Natural killer cell (primary cell): ENCODE measurements at regions of chr5 and their contacts with region 1.

Region 1: DNA sequence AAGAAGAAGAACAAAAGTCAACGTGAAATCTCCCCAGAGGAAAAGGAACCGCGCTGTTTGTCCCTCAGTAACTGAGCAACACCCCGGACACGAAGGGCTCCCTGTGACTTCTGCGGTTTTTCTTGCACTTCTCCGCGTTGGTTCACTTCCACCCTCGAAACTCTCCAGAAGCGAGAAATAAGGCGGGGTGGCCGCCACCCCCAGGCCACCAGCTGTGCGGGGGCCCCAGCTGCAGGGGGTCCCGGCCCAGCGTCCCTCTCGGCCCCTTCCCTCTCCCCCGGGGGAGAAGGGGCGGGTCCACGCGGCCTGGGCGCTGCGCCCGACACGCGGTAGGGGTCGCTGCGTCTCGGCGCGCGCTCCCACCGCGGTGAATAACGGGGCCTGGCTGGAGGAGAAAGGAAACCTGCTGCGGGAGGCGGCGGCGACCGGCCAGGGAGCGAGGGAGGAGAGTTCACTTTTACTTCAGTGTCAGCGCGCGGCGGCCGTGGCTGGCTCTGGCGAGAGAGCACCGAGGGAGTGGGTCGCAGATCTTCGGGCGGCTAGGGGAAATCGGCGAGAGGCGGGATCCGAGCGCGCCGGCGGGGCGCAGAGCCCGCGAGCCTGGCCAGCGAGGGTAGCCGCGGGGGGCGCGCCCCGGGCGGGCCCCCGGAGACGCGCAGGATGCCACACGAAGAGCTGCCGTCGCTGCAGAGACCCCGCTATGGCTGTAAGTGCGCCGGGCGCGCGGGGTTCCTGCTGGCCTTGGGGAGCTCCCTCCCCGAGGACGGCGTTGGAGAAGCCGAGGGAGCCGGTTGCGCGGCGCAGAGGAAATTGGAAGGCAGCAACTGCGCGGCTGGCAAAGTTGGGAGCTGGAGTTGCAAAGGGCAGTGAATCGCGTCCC is at the start of gene IQGAP2:
- DNase-seq: peak; percentile 89 to 94
- ATAC-seq: peak; percentile 58 to 81 (median 65)
- H3K4me3 ChIP-seq: peak within 1 kb of the TSS; percentile 94
- H3K4me3 Mint-ChIP-seq: peak within 1 kb of the TSS; percentile 99
- H3K27ac ChIP-seq: peak within 1 kb of the TSS; percentile 96
- H3K27ac Mint-ChIP-seq: peak within 1 kb of the TSS; percentile 98 to 99
- H3K4me1 ChIP-seq: peaks cover 46% of the 10 kb centered on the region
- H3K4me1 Mint-ChIP-seq: peaks cover 70 to 73% of the 10 kb centered on the region in 2 donors
- H3K27me3 ChIP-seq: no peaks in the 10 kb centered on the region
- H3K27me3 Mint-ChIP-seq: no peaks in the 10 kb centered on the region
- CTCF ChIP-seq: peak; percentile 67
- total RNA-seq, gene IQGAP2: 172 to 218 (median 207) TPM

Region 2: DNA sequence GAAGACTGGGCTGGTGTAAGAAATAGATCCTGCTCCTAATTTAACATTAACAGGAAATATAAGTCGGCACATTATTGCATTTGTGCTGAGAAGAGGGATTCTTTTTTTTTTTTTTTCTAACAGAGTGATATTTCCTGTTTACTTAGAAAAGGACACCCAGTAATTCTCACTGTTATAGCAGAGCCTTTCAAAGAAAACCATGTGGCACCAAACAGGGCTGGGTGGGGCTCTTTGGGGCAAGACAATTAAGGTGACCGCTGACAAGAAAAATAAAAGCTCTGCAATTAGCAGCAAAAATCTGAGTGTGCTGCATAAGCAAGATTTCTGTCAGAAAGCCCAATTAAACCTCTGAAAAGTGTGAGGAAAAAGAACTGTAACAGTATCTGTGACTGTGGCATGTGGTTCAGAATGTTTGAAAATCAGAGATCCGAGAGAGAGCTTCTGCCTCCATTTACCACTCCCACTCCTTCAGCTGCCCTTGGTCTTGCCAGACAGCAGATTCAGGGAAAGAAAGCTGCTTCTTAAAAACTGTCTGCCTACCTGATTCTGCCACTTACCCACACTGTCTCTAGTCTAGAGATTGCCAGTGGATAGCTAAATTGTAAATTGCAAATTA is 77.1 kb before region 1 on chr5:
- intact Hi-C with region 1: loop called (anchors 5 kb)
- DNase-seq: peak; percentile 47 to 66
- ATAC-seq: peak; percentile 93 to 94 (median 93)
- H3K4me3 ChIP-seq: no peak overlapping the region
- H3K4me3 Mint-ChIP-seq: peak overlapping the region; percentile 86
- H3K27ac ChIP-seq: peak overlapping the region; percentile 81
- H3K27ac Mint-ChIP-seq: peak overlapping the region; percentile 90 to 94
- H3K4me1 ChIP-seq: peaks cover 52% of the 10 kb centered on the region
- H3K4me1 Mint-ChIP-seq: peaks cover 69 to 78% of the 10 kb centered on the region in 2 donors
- H3K27me3 ChIP-seq: no peaks in the 10 kb centered on the region
- H3K27me3 Mint-ChIP-seq: no peaks in the 10 kb centered on the region
- CTCF ChIP-seq: no peak

Region 3: GRCh38 chr5:76544268-76544926 is 141.3 kb after region 1 on chr5:
- intact Hi-C with region 1: loop called (anchors 1 kb)
- DNase-seq: peak; percentile 40 to 81
- ATAC-seq: peak in 1 of 3 donors; percentile 16
- H3K4me3 ChIP-seq: no peak overlapping the region
- H3K4me3 Mint-ChIP-seq: peak overlapping the region; percentile 79
- H3K27ac ChIP-seq: peak overlapping the region; percentile 90
- H3K27ac Mint-ChIP-seq: peak overlapping the region; percentile 96 to 98
- H3K4me1 ChIP-seq: peaks cover 62% of the 10 kb centered on the region
- H3K4me1 Mint-ChIP-seq: peaks cover 87 to 90% of the 10 kb centered on the region in 2 donors
- H3K27me3 ChIP-seq: no peaks in the 10 kb centered on the region
- H3K27me3 Mint-ChIP-seq: no peaks in the 10 kb centered on the region
- CTCF ChIP-seq: peak; percentile 55

Region 4: GRCh38 chr5:76715736-76716455 is 312.8 kb after region 1 on chr5 and contains the start of gene F2R:
- intact Hi-C with region 1: loop called (anchors 2 kb)
- DNase-seq: peak; percentile 66 to 81
- ATAC-seq: peak; percentile 76 to 89 (median 89)
- H3K4me3 ChIP-seq: peak within 1 kb of the TSS; percentile 84
- H3K4me3 Mint-ChIP-seq: peak within 1 kb of the TSS; percentile 96
- H3K27ac ChIP-seq: peak within 1 kb of the TSS; percentile 10
- H3K27ac Mint-ChIP-seq: peak within 1 kb of the TSS; percentile 88 to 92
- H3K4me1 ChIP-seq: peaks cover 51% of the 10 kb centered on the region
- H3K4me1 Mint-ChIP-seq: peaks cover 36 to 51% of the 10 kb centered on the region in 2 donors
- H3K27me3 ChIP-seq: peaks cover 5% of the 10 kb centered on the region
- H3K27me3 Mint-ChIP-seq: no peaks in the 10 kb centered on the region
- CTCF ChIP-seq: peak; percentile 80
- total RNA-seq, gene F2R: 43.2 to 53.9 (median 50.1) TPM

Region 5: DNA sequence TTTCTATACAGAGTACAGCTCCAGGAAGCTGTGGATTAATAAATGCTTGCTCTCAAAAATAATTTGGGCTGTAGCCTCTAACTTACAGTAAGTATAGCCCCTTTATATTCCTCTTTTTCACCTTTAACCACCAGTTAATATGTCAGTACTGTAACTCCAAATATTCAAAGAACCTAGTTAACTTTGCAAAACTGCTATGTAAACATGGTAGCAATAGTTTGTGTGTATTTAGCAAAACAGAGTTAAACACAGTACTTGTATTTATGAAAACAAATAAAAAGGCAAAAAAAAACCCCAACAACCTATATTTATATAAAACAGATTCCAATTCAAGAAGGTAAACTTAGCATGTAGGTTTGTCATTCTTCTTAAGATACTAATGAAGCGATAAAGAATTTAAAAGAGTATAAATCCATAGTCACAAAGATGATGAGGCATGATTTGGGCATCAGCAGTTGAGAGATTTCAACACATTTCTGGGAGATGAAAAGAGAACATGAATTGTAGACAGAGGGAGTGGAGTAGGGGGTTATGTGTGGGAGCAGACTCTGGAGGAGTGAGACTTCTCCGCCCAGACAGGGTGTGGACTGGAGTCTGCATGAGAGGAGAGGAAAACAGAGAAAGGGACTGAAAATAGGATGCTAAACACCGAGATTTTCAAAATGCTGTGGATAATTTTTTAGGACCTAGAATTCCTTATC is 368.7 kb after region 1 on chr5:
- intact Hi-C with region 1: loop called (anchors 10 kb)
- DNase-seq: no peak
- ATAC-seq: no peak
- H3K4me3 ChIP-seq: no peak overlapping the region
- H3K4me3 Mint-ChIP-seq: no peak overlapping the region
- H3K27ac ChIP-seq: no peak overlapping the region
- H3K27ac Mint-ChIP-seq: no peak overlapping the region
- H3K4me1 ChIP-seq: no peaks in the 10 kb centered on the region
- H3K4me1 Mint-ChIP-seq: no peaks in the 10 kb centered on the region
- H3K27me3 ChIP-seq: no peaks in the 10 kb centered on the region
- H3K27me3 Mint-ChIP-seq: no peaks in the 10 kb centered on the region
- CTCF ChIP-seq: no peak